H1 (cell line): ENCODE measurements at regions of chr6 and their contacts with region 1.

Region 1: DNA sequence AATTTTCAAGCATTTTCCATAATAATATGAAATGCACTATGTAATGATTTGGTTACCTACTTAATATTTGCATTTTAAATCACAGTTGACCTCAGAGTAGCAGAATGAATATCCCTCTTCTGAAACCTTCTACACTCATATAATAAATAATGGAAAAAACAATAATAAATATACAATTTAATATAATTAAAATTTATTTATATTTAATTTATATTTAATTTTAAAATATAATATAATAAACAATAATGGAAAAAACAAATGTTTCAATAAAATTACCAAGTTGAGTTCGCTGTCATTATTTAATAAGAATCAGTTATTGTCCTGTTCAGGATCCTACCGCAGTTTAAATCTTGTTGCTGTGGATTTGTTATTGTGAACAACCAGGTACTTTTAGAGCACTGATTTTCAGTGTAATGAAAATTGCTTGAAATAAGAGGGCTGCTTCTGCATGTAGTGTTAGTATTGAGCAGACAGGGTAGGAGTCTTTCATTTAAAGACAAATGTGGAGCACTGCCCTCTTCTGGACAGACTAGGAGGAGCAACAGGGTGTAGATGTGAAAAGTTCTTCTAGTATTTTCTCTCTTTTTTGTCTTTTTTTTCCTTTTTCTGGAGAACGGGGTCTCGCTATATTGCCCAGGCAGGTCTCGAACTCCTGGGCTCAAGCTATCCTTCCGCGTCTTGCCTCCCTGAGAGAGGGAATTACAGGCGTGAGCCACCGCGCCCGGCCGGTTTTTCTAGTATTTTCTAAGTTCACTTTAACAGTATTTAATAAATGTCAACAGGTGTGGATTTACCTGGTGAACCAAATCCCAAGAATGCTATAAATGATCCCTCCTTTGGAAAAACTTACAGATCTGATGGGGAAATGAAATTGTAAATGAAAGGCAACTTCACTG is 13.6 kb downstream of the TRAPPC3L start:
- DNase-seq: peak in 1 of 2 experiments; percentile 79
- H3K4me3 ChIP-seq: no peak overlapping the region
- H3K27ac ChIP-seq: no peak overlapping the region
- H3K4me1 ChIP-seq: peaks cover 0 to 12% (median 9%) of the 10 kb centered on the region in 4 experiments; a peak in 5 of 7 replicates
- H3K27me3 ChIP-seq: no peaks in the 10 kb centered on the region
- CTCF ChIP-seq: peak in 2 of 3 experiments; percentile 74 to 86; a peak in 3 of 4 replicates
- EP300 ChIP-seq: no peak
- POLR2A ChIP-seq: no peak
- RAD21 ChIP-seq: peak; percentile 66 to 74

Region 2: DNA sequence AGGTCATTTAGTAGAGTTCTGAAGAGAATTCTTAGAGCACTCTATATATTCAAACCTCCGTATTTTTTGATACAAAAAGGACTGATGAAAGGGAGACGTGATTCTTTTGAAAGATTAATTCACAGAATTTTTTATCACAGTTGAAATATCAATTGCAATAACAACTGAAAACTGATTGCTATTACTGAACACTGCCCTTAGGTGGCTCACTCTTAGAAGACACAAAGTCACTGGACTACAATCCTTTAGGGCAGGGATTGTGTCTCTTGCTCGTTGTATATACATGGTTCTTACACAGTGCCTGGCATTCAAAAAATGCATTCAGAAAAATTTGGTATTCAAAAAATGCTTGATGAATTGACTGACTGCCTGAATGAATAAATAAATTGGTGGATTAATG is 87.8 kb before region 1 on chr6:
- CTCF ChIA-PET with region 1: interaction called, 17 read pairs
- POLR2A ChIA-PET with region 1: interaction called, 3 read pairs
- DNase-seq: no peak
- H3K4me3 ChIP-seq: no peak overlapping the region
- H3K27ac ChIP-seq: no peak overlapping the region
- H3K4me1 ChIP-seq: 0 out of 7 replicates have a peak, but pooled peaks cover 0 to 2% (median 0%) of the 10 kb centered on the region in 4 experiments
- H3K27me3 ChIP-seq: no peaks in the 10 kb centered on the region
- CTCF ChIP-seq: peak in 2 of 3 experiments; percentile 18 to 54; a peak in 2 of 4 replicates
- EP300 ChIP-seq: no peak
- POLR2A ChIP-seq: no peak
- RAD21 ChIP-seq: peak; percentile 27 to 39

Region 3: DNA sequence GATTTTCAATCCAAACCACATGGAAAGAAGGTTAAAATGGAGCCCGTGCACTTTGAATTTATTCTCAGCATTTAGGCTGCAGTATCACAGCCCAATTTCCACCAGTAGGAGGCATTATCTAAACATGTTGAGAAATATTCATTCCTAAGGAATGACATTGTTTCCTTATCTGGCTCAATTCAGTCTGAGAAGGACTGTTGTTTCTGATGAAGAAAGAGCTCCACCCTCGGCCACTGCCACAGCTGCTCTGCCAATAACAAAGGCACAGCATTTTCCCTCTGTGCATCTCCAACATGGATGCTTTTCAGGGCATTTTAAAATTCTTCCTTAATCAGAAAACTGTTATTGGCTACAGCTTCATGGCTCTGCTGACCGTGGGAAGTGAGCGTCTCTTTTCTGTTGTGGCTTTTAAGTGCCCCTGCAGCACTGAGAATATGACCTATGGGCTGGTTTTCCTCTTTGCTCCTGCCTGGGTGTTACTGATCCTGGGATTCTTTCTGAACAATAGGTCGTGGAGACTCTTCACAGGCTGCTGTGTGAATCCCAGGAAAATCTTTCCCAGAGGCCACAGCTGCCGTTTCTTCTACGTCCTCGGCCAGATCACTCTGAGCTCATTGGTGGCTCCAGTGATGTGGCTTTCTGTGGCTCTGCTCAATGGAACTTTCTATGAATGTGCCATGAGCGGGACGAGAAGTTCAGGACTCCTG is 20.4 kb before region 1 on chr6 and contains the start of gene CALHM5:
- CTCF ChIA-PET with region 1: interaction called, 60 read pairs
- POLR2A ChIA-PET with region 1: interaction called, 3 read pairs
- DNase-seq: no peak
- H3K4me3 ChIP-seq: no peak within 1 kb of the TSS
- H3K27ac ChIP-seq: peak within 1 kb of the TSS; percentile 31; the same call in 1 of the 2 replicates
- H3K4me1 ChIP-seq: peaks cover 0 to 11% (median 4%) of the 10 kb centered on the region in 4 experiments; a peak in 4 of 7 replicates
- H3K27me3 ChIP-seq: peaks cover 0 to 1% (median 0%) of the 10 kb centered on the region in 4 experiments; a peak in 1 of 7 replicates
- CTCF ChIP-seq: peak in 2 of 3 experiments; percentile 38 to 66; a peak in 2 of 4 replicates
- EP300 ChIP-seq: no peak
- POLR2A ChIP-seq: no peak
- RAD21 ChIP-seq: peak; percentile 30 to 44
- total RNA-seq, gene CALHM5: 0.09 and 0.17 TPM in 2 replicates

Region 4: DNA sequence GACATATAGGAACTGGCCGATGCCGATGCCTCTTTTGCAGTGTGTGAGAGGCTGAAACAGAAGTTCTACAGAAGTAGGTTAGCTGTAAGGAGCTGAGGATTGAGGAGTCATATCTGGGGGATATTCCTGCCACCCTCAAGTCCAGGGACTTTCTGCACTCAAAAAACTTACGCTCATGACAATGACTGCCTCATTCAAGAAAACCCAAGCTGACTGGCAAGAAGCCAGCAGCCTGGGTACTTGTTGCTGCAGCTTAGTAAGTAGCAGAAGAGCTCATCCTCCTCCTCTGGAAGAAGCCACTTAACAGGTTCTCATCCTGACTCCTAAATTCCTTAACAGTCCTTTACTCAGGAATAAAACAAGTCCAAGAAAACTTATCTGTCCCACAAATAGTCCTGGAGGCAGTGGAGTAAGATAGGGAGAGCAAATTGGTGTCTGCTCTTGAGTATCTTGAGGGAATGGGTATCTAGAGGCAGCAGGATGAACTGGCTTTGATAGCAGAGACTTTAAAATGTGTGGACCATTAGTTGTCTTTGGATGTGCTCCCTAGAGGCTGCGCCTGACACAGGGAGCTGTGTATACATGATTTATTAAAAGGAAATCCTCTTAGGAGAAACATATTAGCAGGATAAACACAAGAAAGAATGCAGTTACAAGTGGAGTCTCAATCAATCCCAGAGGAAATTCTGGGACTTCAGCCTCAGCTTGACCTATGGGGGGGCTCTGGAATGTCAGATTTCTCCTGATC is 13.1 kb before region 1 on chr6:
- CTCF ChIA-PET with region 1: interaction called, 60 read pairs
- POLR2A ChIA-PET with region 1: no interaction called
- DNase-seq: no peak
- H3K4me3 ChIP-seq: no peak overlapping the region
- H3K27ac ChIP-seq: no peak overlapping the region
- H3K4me1 ChIP-seq: peaks cover 0 to 7% (median 0%) of the 10 kb centered on the region in 4 experiments; a peak in 1 of 7 replicates
- H3K27me3 ChIP-seq: peaks cover 0 to 1% (median 0%) of the 10 kb centered on the region in 4 experiments; a peak in 1 of 7 replicates
- CTCF ChIP-seq: no peak
- EP300 ChIP-seq: no peak
- POLR2A ChIP-seq: no peak
- RAD21 ChIP-seq: no peak

Region 5: GRCh38 chr6:116542426-116542825 is 10.5 kb after region 1 on chr6:
- CTCF ChIA-PET with region 1: interaction called, 18 read pairs
- POLR2A ChIA-PET with region 1: no interaction called
- DNase-seq: no peak
- H3K4me3 ChIP-seq: no peak overlapping the region
- H3K27ac ChIP-seq: no peak overlapping the region
- H3K4me1 ChIP-seq: peaks cover 0 to 2% (median 0%) of the 10 kb centered on the region in 4 experiments; a peak in 1 of 7 replicates
- H3K27me3 ChIP-seq: no peaks in the 10 kb centered on the region
- CTCF ChIP-seq: no peak
- EP300 ChIP-seq: no peak
- POLR2A ChIP-seq: no peak
- RAD21 ChIP-seq: no peak

Region 6: DNA sequence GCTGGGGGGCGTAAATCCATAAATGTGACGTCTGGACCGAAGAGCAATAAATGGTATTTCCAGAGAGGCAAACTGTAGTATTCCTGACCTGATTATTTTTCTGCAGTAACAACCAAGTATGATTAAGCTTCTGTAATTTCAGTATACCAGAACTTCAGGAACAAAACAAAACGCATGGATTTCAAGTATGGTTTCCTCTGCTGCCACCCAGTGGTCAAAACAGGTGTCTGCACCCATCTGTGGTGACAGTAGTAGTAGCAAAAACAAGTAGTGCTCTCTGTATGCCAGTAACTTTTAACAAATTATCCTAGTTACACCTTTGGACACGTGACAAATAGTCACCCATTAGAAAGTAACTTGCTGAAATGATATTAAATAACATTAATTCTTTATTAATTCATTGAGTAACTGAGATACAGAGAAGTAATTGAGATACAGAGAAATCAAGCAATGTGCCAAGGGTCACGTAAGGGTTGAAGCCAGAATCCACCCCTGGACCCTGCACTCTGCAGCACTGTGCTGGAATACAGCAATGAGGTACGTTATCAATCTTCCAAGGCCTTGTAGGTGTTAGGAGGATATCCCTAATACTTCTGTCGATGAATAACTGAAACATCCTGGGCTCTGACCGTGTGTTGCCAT is 29.6 kb after region 1 on chr6:
- CTCF ChIA-PET with region 1: interaction called, 47 read pairs
- POLR2A ChIA-PET with region 1: no interaction called
- DNase-seq: peak in 1 of 2 experiments; percentile 83
- H3K4me3 ChIP-seq: no peak overlapping the region; a peak in 1 of 8 replicates
- H3K27ac ChIP-seq: no peak overlapping the region
- H3K4me1 ChIP-seq: no peaks in the 10 kb centered on the region
- H3K27me3 ChIP-seq: no peaks in the 10 kb centered on the region
- CTCF ChIP-seq: peak; percentile 38 to 88 (median 84)
- EP300 ChIP-seq: no peak
- POLR2A ChIP-seq: no peak
- RAD21 ChIP-seq: peak; percentile 87

Region 7: DNA sequence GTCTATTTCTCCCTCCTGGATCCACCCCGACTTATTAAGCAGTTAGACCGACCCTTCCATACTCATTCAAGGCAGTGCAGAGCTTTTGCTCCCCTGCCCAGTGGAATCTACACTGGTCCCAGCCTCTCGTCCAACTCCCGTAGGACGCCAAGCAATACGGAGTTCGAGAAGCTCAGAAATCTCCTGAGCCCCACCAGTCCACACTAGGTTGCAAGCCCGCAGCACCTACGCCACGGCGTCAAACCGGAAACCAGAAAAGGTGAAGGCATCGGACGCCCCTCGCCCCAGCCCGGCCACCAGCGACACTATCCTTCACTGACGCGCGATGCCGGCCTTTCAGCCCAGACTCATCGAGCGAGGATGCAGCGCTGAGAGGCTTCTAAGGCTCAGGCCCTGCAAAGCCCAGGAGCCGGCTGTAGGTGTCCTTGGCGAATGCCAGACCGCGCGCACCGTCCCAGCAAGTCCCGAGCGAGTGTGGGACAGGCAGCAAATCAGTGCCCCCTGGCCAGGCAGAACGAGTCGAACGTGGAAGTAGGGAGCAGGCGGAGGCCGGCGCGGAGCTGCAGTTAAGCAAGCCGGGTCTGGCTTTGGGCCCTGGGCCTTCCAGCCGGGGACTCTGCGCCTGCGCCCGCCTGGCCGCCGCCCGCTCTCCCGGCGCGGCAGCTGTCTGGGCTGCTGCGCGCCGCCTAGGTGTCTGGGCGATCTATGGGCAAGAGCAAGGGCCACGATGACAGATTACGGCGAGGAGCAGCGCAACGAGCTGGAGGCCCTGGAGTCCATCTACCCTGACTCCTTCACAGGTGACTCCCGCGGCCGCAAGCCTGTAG is 39.1 kb after region 1 on chr6 and contains the start of gene RWDD1:
- CTCF ChIA-PET with region 1: interaction called, 47 read pairs
- POLR2A ChIA-PET with region 1: interaction called, 3 read pairs
- DNase-seq: peak; percentile 95 to 98
- H3K4me3 ChIP-seq: peak within 1 kb of the TSS; percentile 76 to 97 (median 90)
- H3K27ac ChIP-seq: peak within 1 kb of the TSS; percentile 27; the same call in 1 of the 2 replicates
- H3K4me1 ChIP-seq: peaks cover 0 to 3% (median 1%) of the 10 kb centered on the region in 4 experiments; a peak in 3 of 7 replicates
- H3K27me3 ChIP-seq: no peaks in the 10 kb centered on the region
- CTCF ChIP-seq: peak in 1 of 3 experiments; percentile 6; a peak in 1 of 4 replicates
- EP300 ChIP-seq: 0 out of 3 replicates have a peak, but pooled peaks of 1 of the 2 experiments have one; percentile 21
- POLR2A ChIP-seq: peak; percentile 69 to 75; a peak in 2 of 3 replicates
- RAD21 ChIP-seq: peak in 1 of 2 experiments; percentile 21; a peak in 1 of 4 replicates
- total RNA-seq, gene RWDD1: 35.2 and 36.8 TPM in 2 replicates